ENCODE measurements at regions of chr11 and their contacts with region 1.

Region 1: DNA sequence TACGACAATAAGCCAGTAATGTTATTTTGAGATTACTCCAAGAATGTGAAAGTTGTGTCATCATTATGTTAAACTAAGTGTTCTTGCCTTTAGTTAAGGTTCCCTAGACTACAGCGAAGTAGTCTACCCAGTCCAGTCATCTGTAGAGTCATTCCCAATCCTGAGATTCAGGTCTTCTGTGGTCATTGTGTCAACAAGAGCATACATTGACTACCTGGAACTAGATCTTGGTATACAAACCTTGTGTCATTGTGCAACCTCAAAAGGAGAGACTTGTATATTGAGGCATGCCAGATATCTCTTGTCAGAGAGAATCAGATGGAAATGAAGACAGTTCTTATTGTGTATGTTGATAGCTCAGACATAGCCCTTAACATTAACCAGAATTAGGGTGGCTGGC is 115.9 kb downstream of the ATM start:
- DNase-seq: no peak
- H3K4me3 ChIP-seq: no peak overlapping the region
- H3K27ac ChIP-seq: no peak overlapping the region
- H3K4me1 ChIP-seq: no peaks in the 10 kb centered on the region
- H3K27me3 ChIP-seq: no peaks in the 10 kb centered on the region
- CTCF ChIP-seq: no peak
- EP300 ChIP-seq: no peak
- POLR2A ChIP-seq: no peak

Region 2: DNA sequence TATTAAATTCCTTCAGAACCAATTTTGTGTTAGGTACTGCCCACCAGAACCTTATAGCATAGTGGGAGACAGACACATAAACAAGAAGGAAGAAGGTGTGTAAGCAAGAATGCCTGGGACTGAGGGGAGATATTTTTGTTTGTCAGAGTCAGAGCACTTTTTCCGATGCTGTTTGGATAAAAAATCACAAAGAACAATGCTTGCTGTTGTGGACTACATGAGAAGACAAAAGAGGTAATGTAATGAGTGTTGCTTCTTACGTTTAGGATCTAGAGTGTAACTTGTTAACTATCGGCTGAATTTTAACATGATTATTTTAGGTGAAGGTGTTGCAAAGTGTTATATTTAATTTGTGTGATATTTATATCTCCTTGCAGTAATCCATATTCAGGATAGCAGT is 31.0 kb before region 1 on chr11:
- intact Hi-C with region 1: no loop called
- DNase-seq: no peak
- H3K4me3 ChIP-seq: no peak overlapping the region
- H3K27ac ChIP-seq: no peak overlapping the region
- H3K4me1 ChIP-seq: no peaks in the 10 kb centered on the region
- H3K27me3 ChIP-seq: no peaks in the 10 kb centered on the region
- CTCF ChIP-seq: no peak
- EP300 ChIP-seq: no peak
- POLR2A ChIP-seq: no peak

Region 3: GRCh38 chr11:108364159-108364558 is 25.4 kb after region 1 on chr11:
- intact Hi-C with region 1: no loop called
- DNase-seq: no peak
- H3K4me3 ChIP-seq: no peak overlapping the region
- H3K27ac ChIP-seq: no peak overlapping the region
- H3K4me1 ChIP-seq: no peaks in the 10 kb centered on the region
- H3K27me3 ChIP-seq: no peaks in the 10 kb centered on the region
- CTCF ChIP-seq: no peak
- EP300 ChIP-seq: no peak
- POLR2A ChIP-seq: no peak

Region 4: DNA sequence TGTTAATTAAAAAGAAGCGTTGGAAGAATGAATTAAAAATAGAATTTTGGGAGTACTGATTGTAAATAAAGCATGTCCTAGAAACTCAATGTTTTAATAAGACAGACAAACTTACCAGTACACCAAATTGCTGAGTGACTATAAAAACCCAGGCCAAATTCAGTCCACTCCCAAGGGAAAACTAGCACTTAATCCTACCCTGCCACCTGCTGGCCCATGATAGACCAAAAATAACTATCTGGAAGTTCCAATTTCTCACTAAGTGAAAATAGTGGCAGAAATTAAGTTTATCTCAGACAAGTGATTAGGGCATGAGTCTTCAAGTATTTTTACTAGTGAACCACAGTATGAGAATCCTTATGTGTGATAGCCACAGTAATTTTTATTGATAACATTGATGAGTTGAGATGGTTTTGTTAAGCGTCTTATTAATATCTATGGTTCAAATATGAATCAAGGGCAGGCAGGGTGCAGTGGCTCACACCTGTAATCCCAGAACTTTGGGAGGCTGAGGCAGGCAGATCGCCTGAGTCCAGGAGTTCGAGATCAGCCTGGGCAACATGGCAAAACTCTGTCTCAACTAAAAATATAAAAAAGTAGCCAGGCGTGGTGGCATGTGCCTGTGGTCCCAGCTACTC is 316.3 kb after region 1 on chr11:
- intact Hi-C with region 1: loop called (anchors 10 kb)
- DNase-seq: no peak
- H3K4me3 ChIP-seq: no peak overlapping the region
- H3K27ac ChIP-seq: no peak overlapping the region
- H3K4me1 ChIP-seq: no peaks in the 10 kb centered on the region
- H3K27me3 ChIP-seq: no peaks in the 10 kb centered on the region
- CTCF ChIP-seq: peak in 2 of 4 experiments; percentile 27 to 34
- EP300 ChIP-seq: no peak
- POLR2A ChIP-seq: no peak